B cell (primary cell): ENCODE measurements at regions of chr2 and their contacts with region 1.

Region 1: DNA sequence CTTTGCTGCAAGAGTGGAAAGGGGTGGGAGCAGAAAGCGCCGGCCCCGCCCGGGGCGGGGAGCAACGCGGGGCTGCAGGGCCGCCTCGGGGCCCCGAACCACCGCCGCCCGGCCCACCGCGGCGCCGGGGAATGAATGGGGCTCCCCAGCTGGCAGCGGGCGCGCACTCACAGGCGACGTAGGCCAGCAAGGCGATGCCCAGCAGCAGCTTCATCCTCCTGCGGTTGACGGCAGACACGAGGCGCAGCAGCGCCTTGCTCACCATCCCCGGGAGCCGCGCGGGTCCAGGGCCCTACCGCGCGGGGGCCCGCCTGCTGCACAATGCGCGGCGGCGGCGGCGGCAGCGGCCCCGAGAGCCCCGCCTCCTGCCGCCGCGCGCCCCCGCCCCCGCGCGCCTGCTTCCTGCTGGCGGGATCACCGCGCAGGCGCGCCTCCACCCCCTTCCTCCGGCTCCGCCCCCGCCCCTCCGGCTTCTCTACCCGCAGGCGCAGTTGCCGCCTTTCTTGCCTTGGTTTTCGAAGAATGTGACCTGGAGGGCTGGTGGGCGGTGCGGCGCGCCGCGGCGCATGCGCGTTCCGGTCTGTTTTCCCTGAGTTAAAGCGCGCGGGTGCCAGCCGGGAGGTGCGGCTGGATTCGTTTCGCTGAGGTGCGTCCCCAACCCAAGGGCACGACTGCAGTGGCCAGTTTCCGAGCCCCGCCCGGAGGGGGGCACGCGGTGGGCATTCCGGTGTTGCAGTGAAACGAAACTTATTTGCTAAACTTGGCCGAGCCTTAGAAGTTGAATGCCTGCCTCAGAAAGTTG is at the start of gene UXS1:
- DNase-seq: peak; percentile 98
- ATAC-seq: peak; percentile 82
- H3K4me3 ChIP-seq: peak within 1 kb of the TSS; percentile 67 to 96 (median 91)
- H3K4me3 Mint-ChIP-seq: peak within 1 kb of the TSS; percentile 97
- H3K27ac ChIP-seq: peak within 1 kb of the TSS; percentile 66 to 82
- H3K27ac Mint-ChIP-seq: peak within 1 kb of the TSS; percentile 96
- H3K4me1 ChIP-seq: peaks cover 22 to 35% of the 10 kb centered on the region in 2 donors
- H3K4me1 Mint-ChIP-seq: peaks cover 44% of the 10 kb centered on the region
- H3K27me3 ChIP-seq: no peaks in the 10 kb centered on the region
- H3K27me3 Mint-ChIP-seq: peaks cover 9% of the 10 kb centered on the region
- CTCF ChIP-seq: no peak
- total RNA-seq, gene UXS1: 44.8 and 46.3 TPM in 2 replicates

Region 2: GRCh38 chr2:106160786-106161261 is 33.4 kb before region 1 on chr2:
- CTCF ChIA-PET with region 1: interaction called, 11 read pairs
- POLR2A ChIA-PET with region 1: interaction called, 12 read pairs
- intact Hi-C with region 1: loop called (anchors 1 kb)
- DNase-seq: peak; percentile 65
- ATAC-seq: peak; percentile 74
- H3K4me3 ChIP-seq: peak overlapping the region; percentile 50 to 66 (median 51)
- H3K4me3 Mint-ChIP-seq: peak overlapping the region; percentile 92
- H3K27ac ChIP-seq: peak overlapping the region; percentile 86 to 92
- H3K27ac Mint-ChIP-seq: peak overlapping the region; percentile 97
- H3K4me1 ChIP-seq: peaks cover 60 to 68% of the 10 kb centered on the region in 2 donors
- H3K4me1 Mint-ChIP-seq: peaks cover 71% of the 10 kb centered on the region
- H3K27me3 ChIP-seq: no peaks in the 10 kb centered on the region
- H3K27me3 Mint-ChIP-seq: no peaks in the 10 kb centered on the region
- CTCF ChIP-seq: no peak

Region 3: GRCh38 chr2:106208874-106209273 is 14.7 kb after region 1 on chr2:
- CTCF ChIA-PET with region 1: no interaction called
- POLR2A ChIA-PET with region 1: no interaction called
- intact Hi-C with region 1: no loop called
- DNase-seq: no peak
- ATAC-seq: no peak
- H3K4me3 ChIP-seq: no peak overlapping the region
- H3K4me3 Mint-ChIP-seq: no peak overlapping the region
- H3K27ac ChIP-seq: no peak overlapping the region
- H3K27ac Mint-ChIP-seq: no peak overlapping the region
- H3K4me1 ChIP-seq: no peaks in the 10 kb centered on the region
- H3K4me1 Mint-ChIP-seq: no peaks in the 10 kb centered on the region
- H3K27me3 ChIP-seq: peaks cover 0 to 5% (median 0%) of the 10 kb centered on the region in 4 experiments
- H3K27me3 Mint-ChIP-seq: no peaks in the 10 kb centered on the region
- CTCF ChIP-seq: no peak

Region 4: DNA sequence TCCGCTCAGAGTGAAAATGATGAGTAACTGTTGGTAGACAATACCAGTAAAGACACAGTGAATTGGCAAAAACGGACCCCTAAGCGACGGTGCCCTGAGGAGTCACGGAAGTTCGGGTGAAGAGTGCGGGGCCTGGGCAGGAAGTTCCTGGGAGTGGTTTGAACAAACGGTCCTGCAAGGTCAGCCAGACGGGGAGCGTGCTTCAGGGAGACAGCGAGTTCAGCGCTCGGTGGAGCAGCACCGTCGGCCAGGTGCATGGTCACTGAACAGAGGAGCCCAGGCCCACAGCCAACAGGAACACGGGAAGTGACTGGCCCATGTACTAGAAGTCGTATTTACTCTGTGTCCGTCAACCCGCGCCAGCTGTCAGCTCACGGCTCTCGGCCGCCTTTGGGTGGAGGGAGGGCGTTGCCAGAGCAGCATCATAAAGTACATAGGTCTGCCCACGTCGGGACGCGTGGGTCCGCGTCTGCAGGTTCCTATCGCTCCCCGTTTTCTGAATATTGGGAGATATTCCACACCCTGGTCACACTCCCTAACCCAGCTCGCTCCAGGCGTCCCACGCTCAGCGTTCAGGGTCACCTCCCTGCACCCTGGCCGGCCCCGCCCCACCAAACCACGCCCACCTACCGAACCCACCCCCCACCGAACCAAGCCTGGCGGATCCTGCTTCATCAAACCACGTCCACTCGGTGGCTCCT is 75.6 kb after region 1 on chr2:
- CTCF ChIA-PET with region 1: no interaction called
- POLR2A ChIA-PET with region 1: no interaction called
- intact Hi-C with region 1: loop called (anchors 5 kb)
- DNase-seq: peak; percentile 66
- ATAC-seq: peak; percentile 78
- H3K4me3 ChIP-seq: peak overlapping the region; percentile 36 to 59 (median 43)
- H3K4me3 Mint-ChIP-seq: peak overlapping the region; percentile 92
- H3K27ac ChIP-seq: no peak overlapping the region
- H3K27ac Mint-ChIP-seq: no peak overlapping the region
- H3K4me1 ChIP-seq: peaks cover 5 to 14% of the 10 kb centered on the region in 2 donors
- H3K4me1 Mint-ChIP-seq: peaks cover 14% of the 10 kb centered on the region
- H3K27me3 ChIP-seq: peaks cover 0 to 2% (median 0%) of the 10 kb centered on the region in 4 experiments
- H3K27me3 Mint-ChIP-seq: peaks cover 10% of the 10 kb centered on the region
- CTCF ChIP-seq: no peak

Region 5: GRCh38 chr2:106282462-106283202 is 88.5 kb after region 1 on chr2:
- CTCF ChIA-PET with region 1: no interaction called
- POLR2A ChIA-PET with region 1: no interaction called
- intact Hi-C with region 1: no loop called
- DNase-seq: no peak
- ATAC-seq: no peak
- H3K4me3 ChIP-seq: no peak overlapping the region
- H3K4me3 Mint-ChIP-seq: no peak overlapping the region
- H3K27ac ChIP-seq: no peak overlapping the region
- H3K27ac Mint-ChIP-seq: no peak overlapping the region
- H3K4me1 ChIP-seq: no peaks in the 10 kb centered on the region
- H3K4me1 Mint-ChIP-seq: no peaks in the 10 kb centered on the region
- H3K27me3 ChIP-seq: peaks cover 0 to 7% (median 0%) of the 10 kb centered on the region in 4 experiments
- H3K27me3 Mint-ChIP-seq: peaks cover 14% of the 10 kb centered on the region
- CTCF ChIP-seq: no peak